ENCODE measurements at regions of chr4 and their contacts with region 1.

Region 1: DNA sequence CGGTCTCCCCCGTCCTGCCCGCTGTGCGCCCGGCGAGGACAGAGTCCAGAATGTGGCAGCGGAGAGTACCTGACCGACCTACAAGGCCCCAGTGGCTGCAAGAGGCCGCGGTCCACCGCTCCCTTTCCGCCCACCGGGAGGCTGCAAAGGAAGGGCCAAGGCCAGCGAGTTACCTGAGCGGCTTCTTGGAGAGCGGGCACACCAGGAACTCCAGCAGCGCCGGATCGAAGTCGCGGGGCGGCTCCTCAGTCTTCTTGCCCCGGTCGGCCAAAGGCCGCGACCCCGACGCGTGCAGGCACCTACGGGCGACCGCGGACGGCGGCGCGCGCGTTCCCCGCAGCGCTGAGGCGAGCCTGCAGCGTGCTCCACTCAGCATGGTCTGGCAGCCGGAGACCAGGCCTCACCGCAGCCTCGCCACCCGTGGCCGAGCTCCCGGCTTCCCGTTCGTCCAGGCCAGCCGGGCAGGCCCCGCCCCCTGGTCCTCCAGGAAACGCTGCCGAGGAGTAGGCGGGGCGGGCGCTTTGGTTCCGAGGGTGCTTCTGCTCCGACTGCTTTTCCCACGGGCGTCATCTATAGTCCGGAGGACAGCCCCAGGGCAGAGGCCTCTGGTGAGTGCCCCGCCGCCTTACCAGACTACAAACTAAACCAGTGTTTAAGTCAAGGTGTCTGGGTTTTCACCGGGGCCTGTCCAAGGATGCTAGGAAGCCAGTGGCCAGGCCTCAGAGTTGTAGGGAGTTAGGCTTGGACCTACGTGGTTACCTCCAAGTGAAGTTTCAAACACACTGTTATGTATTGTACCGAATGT is at the start of gene PYURF:
- DNase-seq: peak; percentile 98
- H3K4me3 ChIP-seq: peak within 1 kb of the TSS; percentile 71 to 87 (median 74)
- H3K27ac ChIP-seq: peak within 1 kb of the TSS; percentile 90 to 97 (median 94)
- H3K4me1 ChIP-seq: peaks cover 0 to 59% (median 20%) of the 10 kb centered on the region in 4 donors
- H3K27me3 ChIP-seq: no peaks in the 10 kb centered on the region
- CTCF ChIP-seq: no peak
- EP300 ChIP-seq: no peak
- POLR2A ChIP-seq: peak; percentile 55 to 77
- total RNA-seq, gene PYURF: 73.1 to 127 (median 111) TPM

Region 2: DNA sequence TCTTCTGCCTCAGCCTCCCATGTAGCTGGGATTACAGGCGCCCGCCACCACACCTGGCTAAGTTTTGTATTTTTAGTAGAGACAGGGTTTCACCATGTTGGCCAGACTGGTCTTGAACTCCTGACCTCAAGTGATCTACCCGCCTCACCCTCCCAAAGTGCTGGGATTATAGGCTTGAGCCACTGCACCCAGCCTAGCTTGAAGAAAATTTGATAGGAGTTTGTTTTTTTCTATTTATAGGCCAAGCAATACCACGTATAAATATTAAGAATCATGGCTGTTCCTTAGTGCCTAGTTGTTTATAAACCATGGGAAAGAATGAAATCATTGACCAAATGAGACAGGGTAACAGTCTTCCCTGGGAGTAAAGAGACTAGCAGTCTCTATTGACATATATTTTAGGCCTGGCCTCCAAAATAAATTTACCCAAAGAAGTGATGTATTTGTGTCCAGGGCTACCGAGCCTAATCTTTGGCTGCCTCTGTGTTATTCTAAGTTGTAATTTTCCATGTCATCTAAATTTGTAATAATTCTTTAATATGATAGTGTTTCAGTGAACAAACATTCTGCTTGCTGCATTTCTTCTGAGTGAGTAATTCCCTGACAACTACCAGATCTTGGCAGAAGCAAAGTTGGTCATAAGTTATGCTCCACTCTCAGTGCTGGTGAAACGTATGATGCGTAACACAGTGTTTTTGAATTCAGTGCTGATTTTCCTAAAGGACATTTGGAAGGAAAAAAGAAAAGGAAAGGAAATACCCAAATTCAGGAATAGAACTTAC is 505.8 kb before region 1 on chr4:
- intact Hi-C with region 1: loop called (anchors 5 kb)
- DNase-seq: peak; percentile 71
- H3K4me3 ChIP-seq: no peak overlapping the region
- H3K27ac ChIP-seq: peak overlapping the region; percentile 93 to 97 (median 94)
- H3K4me1 ChIP-seq: peaks cover 3 to 94% (median 90%) of the 10 kb centered on the region in 4 donors
- H3K27me3 ChIP-seq: no peaks in the 10 kb centered on the region
- CTCF ChIP-seq: no peak
- EP300 ChIP-seq: peak; percentile 79 to 89 (median 83)
- POLR2A ChIP-seq: no peak

Region 3: GRCh38 chr4:88378691-88379559 is 144.6 kb before region 1 on chr4 and contains the start of gene HERC6:
- intact Hi-C with region 1: loop called (anchors 5 kb)
- DNase-seq: peak; percentile 89
- H3K4me3 ChIP-seq: peak within 1 kb of the TSS; percentile 88 to 100 (median 98)
- H3K27ac ChIP-seq: peak within 1 kb of the TSS; percentile 89 to 95 (median 92)
- H3K4me1 ChIP-seq: no peaks in the 10 kb centered on the region
- H3K27me3 ChIP-seq: no peaks in the 10 kb centered on the region
- CTCF ChIP-seq: peak; percentile 60 to 87 (median 70)
- EP300 ChIP-seq: no peak
- POLR2A ChIP-seq: no peak
- total RNA-seq, gene HERC6: 5.7 to 8.6 (median 7.4) TPM

Region 4: GRCh38 chr4:88591787-88592599 is 68.5 kb after region 1 on chr4 and contains the start of gene HERC3:
- intact Hi-C with region 1: loop called (anchors 2 kb)
- DNase-seq: peak; percentile 95
- H3K4me3 ChIP-seq: peak within 1 kb of the TSS; percentile 93 to 100 (median 98)
- H3K27ac ChIP-seq: peak within 1 kb of the TSS; percentile 97 to 99 (median 98)
- H3K4me1 ChIP-seq: peaks cover 0 to 28% (median 16%) of the 10 kb centered on the region in 4 donors
- H3K27me3 ChIP-seq: no peaks in the 10 kb centered on the region
- CTCF ChIP-seq: peak in 1 of 4 experiments; percentile 14
- EP300 ChIP-seq: no peak
- POLR2A ChIP-seq: peak; percentile 23 to 24
- total RNA-seq, gene HERC3: 34.6 to 44.9 (median 36.3) TPM

Region 5: DNA sequence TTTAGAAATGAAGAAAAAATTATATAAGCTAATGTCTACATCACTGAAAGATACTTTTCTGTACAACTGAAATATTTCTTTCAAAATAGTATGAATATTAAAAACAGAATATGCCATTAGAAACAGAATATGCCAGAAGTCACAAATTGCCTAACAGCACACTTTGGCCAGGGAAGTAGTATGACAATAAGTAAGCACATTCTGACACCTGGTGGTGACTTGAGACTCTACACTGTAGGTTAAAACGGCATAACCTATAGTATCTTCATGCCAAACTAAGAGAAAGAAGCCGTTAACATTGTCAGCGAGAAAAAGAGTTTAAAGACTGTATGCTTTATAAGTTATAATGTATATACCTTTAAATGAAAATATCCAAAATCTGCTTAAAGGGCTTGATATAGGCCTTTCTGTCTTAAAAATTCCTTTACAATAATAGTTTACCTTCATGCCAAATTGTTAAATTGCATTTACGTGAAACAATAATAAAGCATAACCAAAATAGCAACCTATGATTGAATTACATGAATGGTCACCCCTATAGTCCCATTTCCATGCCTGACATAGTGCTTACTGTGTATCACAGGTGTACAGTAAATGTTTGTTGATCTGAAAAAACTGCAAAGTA is 500.6 kb after region 1 on chr4:
- intact Hi-C with region 1: loop called (anchors 1 kb)
- DNase-seq: peak; percentile 66
- H3K4me3 ChIP-seq: no peak overlapping the region
- H3K27ac ChIP-seq: no peak overlapping the region
- H3K4me1 ChIP-seq: peaks cover 0 to 5% (median 2%) of the 10 kb centered on the region in 4 donors
- H3K27me3 ChIP-seq: no peaks in the 10 kb centered on the region
- CTCF ChIP-seq: peak; percentile 77 to 92 (median 86)
- EP300 ChIP-seq: no peak
- POLR2A ChIP-seq: no peak